CD8-positive, alpha-beta T cell (primary cell): ENCODE measurements at regions of chr9 and their contacts with region 1.

Region 1: DNA sequence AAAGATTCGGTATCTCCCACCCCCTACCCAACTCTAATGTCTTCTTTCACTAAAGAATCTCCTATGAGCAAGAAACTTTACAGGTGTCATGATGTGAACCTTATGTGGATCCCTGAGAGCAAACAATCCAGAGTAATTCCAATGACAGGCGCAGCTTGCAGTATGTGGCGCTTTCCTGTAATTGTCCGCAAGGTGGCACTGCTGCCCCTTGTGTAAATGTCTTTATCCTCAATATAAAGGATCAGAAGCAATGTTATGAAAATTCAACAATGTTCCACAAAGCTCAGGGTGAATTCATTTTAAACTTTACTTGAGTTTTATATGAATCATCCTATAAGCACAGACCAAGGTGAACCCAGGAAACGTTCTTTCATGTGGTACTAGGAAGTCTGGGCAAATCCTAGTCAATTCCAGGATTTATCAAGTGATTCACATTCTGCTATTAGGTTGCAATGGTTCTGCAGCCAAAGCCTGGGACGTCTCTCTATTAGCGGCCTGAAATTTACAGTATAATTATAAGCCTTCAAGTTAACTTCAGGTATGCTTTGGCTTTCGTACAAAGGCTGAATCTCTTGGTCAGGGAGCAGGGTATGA is 113.7 kb downstream of the TRPM6 start:
- DNase-seq: peak; percentile 32 to 78 (median 70)
- ATAC-seq: peak; percentile 77
- H3K4me3 ChIP-seq: no peak overlapping the region
- H3K4me3 Mint-ChIP-seq: no peak overlapping the region
- H3K27ac ChIP-seq: no peak overlapping the region
- H3K27ac Mint-ChIP-seq: no peak overlapping the region
- H3K4me1 ChIP-seq: no peaks in the 10 kb centered on the region
- H3K4me1 Mint-ChIP-seq: no peaks in the 10 kb centered on the region
- H3K27me3 ChIP-seq: no peaks in the 10 kb centered on the region
- H3K27me3 Mint-ChIP-seq: peaks cover 20% of the 10 kb centered on the region
- CTCF ChIP-seq: peak; percentile 93

Region 2: DNA sequence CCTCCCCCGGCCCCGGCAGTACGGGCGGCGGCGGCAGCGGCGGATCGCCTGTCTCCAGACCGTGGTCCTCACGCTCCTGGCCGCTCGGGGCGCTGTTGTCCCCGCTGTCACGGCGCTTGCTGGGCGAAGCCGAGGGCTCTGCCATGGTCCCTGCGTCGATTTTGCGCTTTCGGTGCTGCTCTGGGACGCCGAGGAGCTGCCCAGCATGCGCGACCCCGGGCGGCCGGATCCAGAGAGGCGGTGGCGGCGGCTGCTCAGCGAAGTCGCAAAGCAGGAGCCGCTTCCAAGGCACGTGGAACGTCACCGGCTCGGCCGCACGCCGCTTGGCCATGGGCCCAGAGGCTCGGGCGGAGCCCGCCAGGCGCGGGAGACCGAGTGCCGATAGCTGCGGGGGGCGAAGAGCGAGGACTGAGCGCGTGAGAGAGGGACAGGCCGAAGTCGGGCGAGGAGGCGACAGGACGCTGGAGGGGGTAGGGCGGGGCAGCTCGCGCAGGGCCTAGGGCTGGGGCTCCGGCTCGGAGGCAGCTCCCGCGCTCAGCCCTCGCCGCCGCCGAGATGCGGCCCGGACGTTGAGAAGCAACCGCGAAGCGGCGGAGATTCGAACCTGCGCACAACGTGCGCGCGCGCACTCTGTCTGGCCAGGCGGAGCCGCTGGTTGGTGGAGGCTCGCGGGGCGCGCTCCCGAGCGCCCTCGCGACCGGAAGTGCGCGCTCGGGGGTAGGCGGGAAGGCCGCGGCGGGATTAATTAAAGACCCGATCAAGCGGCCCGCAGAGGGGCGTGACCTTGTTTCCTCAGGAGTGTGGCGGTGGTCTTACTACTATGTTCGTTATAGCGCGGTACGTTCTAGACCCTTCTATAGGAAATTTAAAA is 178.5 kb after region 1 on chr9 and contains the start of gene C9orf40:
- CTCF ChIA-PET with region 1: interaction called, 23 read pairs
- POLR2A ChIA-PET with region 1: no interaction called
- intact Hi-C with region 1: loop called (anchors 2 to 5 kb)
- DNase-seq: peak; percentile 81 to 93 (median 92)
- ATAC-seq: peak; percentile 88
- H3K4me3 ChIP-seq: peak within 1 kb of the TSS; percentile 86 to 99
- H3K4me3 Mint-ChIP-seq: peak within 1 kb of the TSS; percentile 98
- H3K27ac ChIP-seq: peak within 1 kb of the TSS; percentile 87 to 95
- H3K27ac Mint-ChIP-seq: peak within 1 kb of the TSS; percentile 94
- H3K4me1 ChIP-seq: no peaks in the 10 kb centered on the region
- H3K4me1 Mint-ChIP-seq: peaks cover 20% of the 10 kb centered on the region
- H3K27me3 ChIP-seq: no peaks in the 10 kb centered on the region
- H3K27me3 Mint-ChIP-seq: no peaks in the 10 kb centered on the region
- CTCF ChIP-seq: peak; percentile 77
- total RNA-seq, gene C9orf40: 1.5 to 2.3 TPM

Region 3: GRCh38 chr9:75064307-75065025 is 290.5 kb after region 1 on chr9:
- CTCF ChIA-PET with region 1: interaction called, 34 read pairs
- POLR2A ChIA-PET with region 1: no interaction called
- intact Hi-C with region 1: no loop called
- DNase-seq: no peak
- ATAC-seq: no peak
- H3K4me3 ChIP-seq: no peak overlapping the region
- H3K4me3 Mint-ChIP-seq: no peak overlapping the region
- H3K27ac ChIP-seq: no peak overlapping the region
- H3K27ac Mint-ChIP-seq: peak overlapping the region; percentile 78
- H3K4me1 ChIP-seq: no peaks in the 10 kb centered on the region
- H3K4me1 Mint-ChIP-seq: no peaks in the 10 kb centered on the region
- H3K27me3 ChIP-seq: no peaks in the 10 kb centered on the region
- H3K27me3 Mint-ChIP-seq: no peaks in the 10 kb centered on the region
- CTCF ChIP-seq: no peak

Region 4: GRCh38 chr9:75083188-75083970 is 309.4 kb after region 1 on chr9:
- CTCF ChIA-PET with region 1: interaction called, 43 read pairs
- POLR2A ChIA-PET with region 1: no interaction called
- intact Hi-C with region 1: no loop called
- DNase-seq: peak in 6 of 9 experiments; percentile 18 to 79 (median 59)
- ATAC-seq: peak; percentile 47
- H3K4me3 ChIP-seq: no peak overlapping the region
- H3K4me3 Mint-ChIP-seq: no peak overlapping the region
- H3K27ac ChIP-seq: peak overlapping the region in 1 of 2 experiments; percentile 53
- H3K27ac Mint-ChIP-seq: peak overlapping the region; percentile 91
- H3K4me1 ChIP-seq: peaks cover 22% of the 10 kb centered on the region
- H3K4me1 Mint-ChIP-seq: peaks cover 45% of the 10 kb centered on the region
- H3K27me3 ChIP-seq: no peaks in the 10 kb centered on the region
- H3K27me3 Mint-ChIP-seq: no peaks in the 10 kb centered on the region
- CTCF ChIP-seq: no peak

Region 5: GRCh38 chr9:75238311-75238978 is 464.5 kb after region 1 on chr9:
- CTCF ChIA-PET with region 1: interaction called, 10 read pairs
- POLR2A ChIA-PET with region 1: no interaction called
- intact Hi-C with region 1: loop called in 1 of 2 experiments (anchors 1 kb)
- DNase-seq: peak in 7 of 9 experiments; percentile 1 to 70 (median 27)
- ATAC-seq: peak; percentile 93
- H3K4me3 ChIP-seq: no peak overlapping the region
- H3K4me3 Mint-ChIP-seq: no peak overlapping the region
- H3K27ac ChIP-seq: no peak overlapping the region
- H3K27ac Mint-ChIP-seq: no peak overlapping the region
- H3K4me1 ChIP-seq: no peaks in the 10 kb centered on the region
- H3K4me1 Mint-ChIP-seq: no peaks in the 10 kb centered on the region
- H3K27me3 ChIP-seq: no peaks in the 10 kb centered on the region
- H3K27me3 Mint-ChIP-seq: no peaks in the 10 kb centered on the region
- CTCF ChIP-seq: peak; percentile 62

Region 6: GRCh38 chr9:76643399-76644117 is 1869.6 kb after region 1 on chr9:
- CTCF ChIA-PET with region 1: no interaction called
- POLR2A ChIA-PET with region 1: no interaction called
- intact Hi-C with region 1: no loop called
- DNase-seq: no peak
- ATAC-seq: no peak
- H3K4me3 ChIP-seq: no peak overlapping the region
- H3K4me3 Mint-ChIP-seq: no peak overlapping the region
- H3K27ac ChIP-seq: no peak overlapping the region
- H3K27ac Mint-ChIP-seq: no peak overlapping the region
- H3K4me1 ChIP-seq: no peaks in the 10 kb centered on the region
- H3K4me1 Mint-ChIP-seq: no peaks in the 10 kb centered on the region
- H3K27me3 ChIP-seq: no peaks in the 10 kb centered on the region
- H3K27me3 Mint-ChIP-seq: no peaks in the 10 kb centered on the region
- CTCF ChIP-seq: no peak